ENCODE measurements at regions of chr6 and their contacts with region 1.

Region 1: GRCh38 chr6:160137989-160138835 is 16.6 kb downstream of the SLC22A1 start:
- DNase-seq: peak; percentile 76
- H3K4me3 Mint-ChIP-seq: no peak overlapping the region
- H3K27ac Mint-ChIP-seq: no peak overlapping the region
- H3K4me1 Mint-ChIP-seq: peaks cover 9% of the 10 kb centered on the region
- H3K27me3 Mint-ChIP-seq: no peaks in the 10 kb centered on the region

Region 2: DNA sequence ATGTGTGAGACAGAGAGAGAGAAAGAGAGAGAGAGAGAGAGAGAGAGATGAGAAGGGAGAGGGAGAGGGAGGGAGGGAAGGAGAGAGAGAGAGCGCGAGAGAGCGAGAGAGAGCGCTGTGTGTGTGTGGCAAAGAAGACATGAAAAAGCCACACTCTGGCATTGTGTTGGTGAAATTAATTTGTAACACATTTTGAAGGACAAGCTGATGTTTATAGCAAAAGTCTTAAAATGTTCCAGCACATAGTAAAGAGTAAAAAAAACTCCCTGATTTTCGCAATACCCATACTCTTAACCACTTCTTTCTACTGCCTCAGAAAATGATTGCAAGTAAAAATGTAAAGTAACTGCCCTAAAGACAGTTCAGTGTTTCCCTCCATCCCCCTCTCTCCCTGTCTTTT is 40.1 kb after region 1 on chr6:
- CTCF ChIA-PET with region 1: no interaction called
- POLR2A ChIA-PET with region 1: no interaction called
- DNase-seq: no peak
- H3K4me3 Mint-ChIP-seq: no peak overlapping the region
- H3K27ac Mint-ChIP-seq: no peak overlapping the region
- H3K4me1 Mint-ChIP-seq: no peaks in the 10 kb centered on the region
- H3K27me3 Mint-ChIP-seq: peaks cover 10% of the 10 kb centered on the region

Region 3: DNA sequence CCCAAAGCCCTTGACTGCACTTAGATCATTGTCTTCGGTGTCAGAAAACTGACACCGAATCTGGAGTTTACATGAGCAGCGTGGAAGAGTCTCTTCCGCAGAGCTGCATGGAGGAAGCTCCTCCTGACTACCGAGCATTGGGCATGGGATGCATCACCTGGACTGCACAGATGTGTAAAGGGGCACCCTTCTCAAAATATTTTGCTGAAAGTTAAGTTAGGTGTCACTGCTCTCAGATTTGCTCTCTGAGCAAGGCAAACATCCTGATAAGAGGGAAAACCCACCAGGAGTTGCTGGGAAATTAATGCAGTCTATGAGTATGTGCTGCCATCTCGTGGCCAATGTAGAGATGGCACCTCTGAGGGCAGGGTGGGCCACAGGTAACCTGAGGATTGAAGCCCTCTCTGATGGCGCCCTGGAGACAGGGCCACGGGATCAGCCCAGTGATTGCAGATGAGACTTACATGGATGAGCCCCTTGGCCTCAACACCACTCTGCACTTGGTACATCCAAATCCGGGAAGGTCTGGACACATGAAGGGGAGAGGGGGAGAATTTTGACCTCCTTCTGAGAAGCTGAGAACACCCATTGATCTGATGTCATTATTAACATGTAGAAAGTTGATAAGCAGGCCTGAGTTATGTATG is 396.0 kb after region 1 on chr6:
- CTCF ChIA-PET with region 1: interaction called, 27 read pairs
- POLR2A ChIA-PET with region 1: no interaction called
- DNase-seq: peak; percentile 57
- H3K4me3 Mint-ChIP-seq: no peak overlapping the region
- H3K27ac Mint-ChIP-seq: no peak overlapping the region
- H3K4me1 Mint-ChIP-seq: no peaks in the 10 kb centered on the region
- H3K27me3 Mint-ChIP-seq: peaks cover 13% of the 10 kb centered on the region

Measured in activated CD4-positive, alpha-beta memory T cell treated with anti-CD3 and anti-CD28 coated beads, Interleukin-2, amount 10 ng/mL, durations not matched to agents 7 days and 5 days (primary cell).